ENCODE measurements at regions of chr3 and their contacts with region 1.

Region 1: DNA sequence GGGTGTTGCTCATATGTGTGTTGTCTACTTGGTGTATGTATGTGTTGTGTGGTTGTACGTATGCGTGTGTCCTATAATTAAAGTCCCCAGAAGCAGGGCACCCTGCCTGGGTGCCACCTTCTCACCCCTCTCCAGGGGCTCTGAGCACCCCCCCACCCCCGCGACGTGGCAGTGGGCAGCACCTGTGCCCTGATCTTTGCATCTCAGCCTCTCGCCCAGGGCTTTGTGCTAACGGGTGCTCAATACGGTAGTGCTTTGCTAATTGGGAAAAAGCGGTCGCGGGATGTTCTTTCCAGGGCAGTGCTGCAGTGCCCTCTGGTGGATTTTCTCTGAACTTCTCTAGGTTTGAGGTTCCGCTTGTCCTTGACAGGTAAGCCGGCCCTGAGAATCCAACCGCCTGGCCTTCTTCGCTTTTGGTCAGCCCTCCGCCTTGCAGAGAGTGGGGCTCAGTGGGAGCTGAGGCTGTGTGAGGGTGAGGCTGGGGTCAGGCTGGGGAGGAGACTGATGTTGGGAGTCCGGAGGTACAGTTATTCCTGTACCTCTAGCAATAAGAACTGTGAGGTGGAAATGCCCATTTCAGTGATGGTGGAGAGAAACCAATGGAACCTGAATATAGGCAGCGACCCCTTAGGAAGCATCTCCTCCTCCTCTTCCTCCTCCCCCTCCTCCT is 17.6 kb upstream of the EPHB3 start:
- DNase-seq: peak; percentile 47 to 86 (median 80)
- ATAC-seq: peak; percentile 87
- H3K4me3 ChIP-seq: no peak overlapping the region
- H3K4me3 Mint-ChIP-seq: peak overlapping the region in 9 of 10 donors; percentile 39 to 67 (median 58)
- H3K27ac ChIP-seq: no peak overlapping the region
- H3K27ac Mint-ChIP-seq: peak overlapping the region in 5 of 9 donors; percentile 28 to 86 (median 52)
- H3K4me1 ChIP-seq: peaks cover 0 to 3% of the 10 kb centered on the region in 2 donors
- H3K4me1 Mint-ChIP-seq: peaks cover 7 to 36% (median 26%) of the 10 kb centered on the region in 7 donors
- H3K27me3 ChIP-seq: no peaks in the 10 kb centered on the region
- H3K27me3 Mint-ChIP-seq: peaks cover 0 to 30% (median 19%) of the 10 kb centered on the region in 5 donors

Region 2: GRCh38 chr3:183895296-183895695 is 648.7 kb before region 1 on chr3:
- CTCF ChIA-PET with region 1: interaction called, 5 read pairs
- POLR2A ChIA-PET with region 1: no interaction called
- intact Hi-C with region 1: loop called (anchors 1 to 5 kb)
- DNase-seq: peak in 7 of 9 donors; percentile 19 to 67 (median 49)
- ATAC-seq: peak; percentile 91
- H3K4me3 ChIP-seq: no peak overlapping the region
- H3K4me3 Mint-ChIP-seq: no peak overlapping the region
- H3K27ac ChIP-seq: no peak overlapping the region
- H3K27ac Mint-ChIP-seq: peak overlapping the region in 1 of 9 donors; percentile 18
- H3K4me1 ChIP-seq: no peaks in the 10 kb centered on the region
- H3K4me1 Mint-ChIP-seq: peaks cover 0 to 6% (median 0%) of the 10 kb centered on the region in 7 donors
- H3K27me3 ChIP-seq: peaks cover 0 to 3% of the 10 kb centered on the region in 2 donors
- H3K27me3 Mint-ChIP-seq: peaks cover 7 to 29% (median 11%) of the 10 kb centered on the region in 5 donors

Region 3: DNA sequence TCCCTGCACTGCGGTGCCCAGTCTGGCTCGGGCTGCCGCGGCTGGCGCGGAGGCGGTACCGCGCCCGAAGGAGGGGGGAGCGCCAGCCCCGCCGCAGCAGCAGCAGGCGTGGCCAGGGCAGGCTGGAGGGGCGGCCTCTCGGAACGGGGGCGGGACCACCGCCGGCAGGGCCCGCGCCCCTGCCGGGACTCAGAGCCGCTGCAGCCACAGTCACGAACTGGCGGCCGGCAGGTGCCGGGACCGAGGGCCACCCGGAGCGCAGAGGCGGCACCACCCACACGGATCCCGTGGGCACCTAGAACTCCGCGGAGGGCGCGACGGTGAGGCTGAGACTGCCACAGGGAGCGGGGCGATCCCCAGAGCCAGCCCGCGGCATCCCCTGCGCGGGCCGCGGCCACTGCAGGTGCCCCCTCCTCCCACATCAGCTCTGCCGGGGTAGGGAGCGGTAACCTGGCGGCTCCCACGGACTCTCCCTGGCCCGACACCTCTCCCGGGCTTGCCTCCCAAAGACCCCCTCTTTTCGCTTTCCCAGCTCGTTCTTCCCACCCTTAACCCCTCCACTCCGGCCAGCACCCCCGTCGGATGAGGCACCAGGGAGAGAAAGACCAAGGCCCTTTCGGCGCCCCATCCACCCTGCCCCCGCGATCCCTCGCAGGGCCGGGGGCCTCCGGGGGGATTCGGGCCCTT is 314.4 kb before region 1 on chr3 and contains the start of gene VWA5B2:
- CTCF ChIA-PET with region 1: no interaction called
- POLR2A ChIA-PET with region 1: no interaction called
- intact Hi-C with region 1: loop called in 1 of 2 experiments (anchors 2 kb)
- DNase-seq: peak; percentile 58 to 72 (median 66)
- ATAC-seq: peak; percentile 96
- H3K4me3 ChIP-seq: peak within 1 kb of the TSS; percentile 58
- H3K4me3 Mint-ChIP-seq: peak within 1 kb of the TSS; percentile 41 to 82 (median 74)
- H3K27ac ChIP-seq: no peak within 1 kb of the TSS
- H3K27ac Mint-ChIP-seq: no peak within 1 kb of the TSS
- H3K4me1 ChIP-seq: peaks cover 0 to 5% of the 10 kb centered on the region in 2 donors
- H3K4me1 Mint-ChIP-seq: peaks cover 8 to 14% (median 10%) of the 10 kb centered on the region in 7 donors
- H3K27me3 ChIP-seq: peaks cover 4 to 17% of the 10 kb centered on the region in 2 donors
- H3K27me3 Mint-ChIP-seq: peaks cover 46 to 65% (median 57%) of the 10 kb centered on the region in 5 donors
- total RNA-seq, gene VWA5B2: not detected

Region 4: GRCh38 chr3:184325715-184326369 is 218.1 kb before region 1 on chr3:
- CTCF ChIA-PET with region 1: no interaction called
- POLR2A ChIA-PET with region 1: no interaction called
- intact Hi-C with region 1: no loop called
- DNase-seq: peak in 1 of 9 donors; percentile 42
- ATAC-seq: no peak
- H3K4me3 ChIP-seq: no peak overlapping the region
- H3K4me3 Mint-ChIP-seq: no peak overlapping the region
- H3K27ac ChIP-seq: no peak overlapping the region
- H3K27ac Mint-ChIP-seq: peak overlapping the region in 1 of 9 donors; percentile 41
- H3K4me1 ChIP-seq: no peaks in the 10 kb centered on the region
- H3K4me1 Mint-ChIP-seq: peaks cover 0 to 12% (median 0%) of the 10 kb centered on the region in 7 donors
- H3K27me3 ChIP-seq: no peaks in the 10 kb centered on the region
- H3K27me3 Mint-ChIP-seq: no peaks in the 10 kb centered on the region

Region 5: DNA sequence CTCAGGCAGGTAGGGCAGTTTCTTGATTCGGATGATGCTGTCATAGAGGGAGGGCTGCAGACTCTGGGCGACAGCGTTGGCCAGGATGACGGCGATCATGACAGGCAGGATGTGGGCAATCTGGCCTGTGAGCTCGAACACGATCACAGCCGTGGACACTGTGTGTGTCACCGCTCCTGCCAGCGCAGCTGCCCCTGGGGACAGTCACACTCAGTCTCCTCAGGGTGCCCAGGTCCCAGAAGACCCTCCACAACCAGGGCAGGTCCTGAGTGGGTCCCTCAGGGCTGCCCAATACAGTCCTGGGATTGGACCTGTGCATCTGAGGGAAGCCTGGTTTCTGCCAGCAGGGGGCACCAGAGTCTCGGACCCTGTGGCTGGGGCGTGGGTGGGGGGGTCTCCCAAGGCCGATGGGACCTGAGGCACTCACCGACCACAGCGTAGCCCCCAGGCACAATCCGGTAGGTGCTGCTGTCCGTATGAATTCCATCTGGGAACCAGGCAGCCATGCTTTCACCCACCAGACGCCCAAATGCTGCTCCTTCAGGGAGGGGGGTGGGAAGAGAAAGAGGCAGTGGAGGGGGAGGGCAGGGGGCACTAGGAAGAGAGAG is 189.8 kb before region 1 on chr3:
- CTCF ChIA-PET with region 1: interaction called, 17 read pairs
- POLR2A ChIA-PET with region 1: no interaction called
- intact Hi-C with region 1: loop called in 1 of 2 experiments (anchors 1 kb)
- DNase-seq: peak; percentile 21 to 64 (median 48)
- ATAC-seq: peak; percentile 78
- H3K4me3 ChIP-seq: no peak overlapping the region
- H3K4me3 Mint-ChIP-seq: no peak overlapping the region
- H3K27ac ChIP-seq: no peak overlapping the region
- H3K27ac Mint-ChIP-seq: peak overlapping the region in 1 of 9 donors; percentile 55
- H3K4me1 ChIP-seq: peaks cover 0 to 7% of the 10 kb centered on the region in 2 donors
- H3K4me1 Mint-ChIP-seq: peaks cover 0 to 2% (median 0%) of the 10 kb centered on the region in 7 donors
- H3K27me3 ChIP-seq: no peaks in the 10 kb centered on the region
- H3K27me3 Mint-ChIP-seq: no peaks in the 10 kb centered on the region

Region 6: GRCh38 chr3:184417619-184418327 is 126.2 kb before region 1 on chr3:
- CTCF ChIA-PET with region 1: interaction called, 50 read pairs
- POLR2A ChIA-PET with region 1: no interaction called
- intact Hi-C with region 1: loop called (anchors 1 kb)
- DNase-seq: peak; percentile 48 to 76 (median 70)
- ATAC-seq: peak; percentile 96
- H3K4me3 ChIP-seq: no peak overlapping the region
- H3K4me3 Mint-ChIP-seq: no peak overlapping the region
- H3K27ac ChIP-seq: no peak overlapping the region
- H3K27ac Mint-ChIP-seq: no peak overlapping the region
- H3K4me1 ChIP-seq: no peaks in the 10 kb centered on the region
- H3K4me1 Mint-ChIP-seq: no peaks in the 10 kb centered on the region
- H3K27me3 ChIP-seq: no peaks in the 10 kb centered on the region
- H3K27me3 Mint-ChIP-seq: peaks cover 0 to 6% (median 2%) of the 10 kb centered on the region in 5 donors

Region 7: GRCh38 chr3:184513276-184514170 is 30.5 kb before region 1 on chr3:
- CTCF ChIA-PET with region 1: interaction called, 13 read pairs
- POLR2A ChIA-PET with region 1: no interaction called
- intact Hi-C with region 1: loop called (anchors 1 kb)
- DNase-seq: peak; percentile 59 to 83 (median 75)
- ATAC-seq: peak; percentile 99
- H3K4me3 ChIP-seq: peak overlapping the region; percentile 40
- H3K4me3 Mint-ChIP-seq: peak overlapping the region; percentile 12 to 81 (median 69)
- H3K27ac ChIP-seq: no peak overlapping the region
- H3K27ac Mint-ChIP-seq: no peak overlapping the region
- H3K4me1 ChIP-seq: no peaks in the 10 kb centered on the region
- H3K4me1 Mint-ChIP-seq: peaks cover 4 to 14% (median 11%) of the 10 kb centered on the region in 7 donors
- H3K27me3 ChIP-seq: peaks cover 0 to 4% of the 10 kb centered on the region in 2 donors
- H3K27me3 Mint-ChIP-seq: peaks cover 49 to 77% (median 63%) of the 10 kb centered on the region in 5 donors

Region 8: GRCh38 chr3:184561061-184561912 is 17.3 kb after region 1 on chr3 and contains the start of gene EPHB3:
- CTCF ChIA-PET with region 1: interaction called, 37 read pairs
- POLR2A ChIA-PET with region 1: interaction called, 5 read pairs
- intact Hi-C with region 1: loop called in 1 of 2 experiments (anchors 1 kb)
- DNase-seq: peak; percentile 81 to 90 (median 89)
- ATAC-seq: peak; percentile 92
- H3K4me3 ChIP-seq: peak within 1 kb of the TSS; percentile 55
- H3K4me3 Mint-ChIP-seq: peak within 1 kb of the TSS; percentile 66 to 87 (median 81)
- H3K27ac ChIP-seq: no peak within 1 kb of the TSS
- H3K27ac Mint-ChIP-seq: peak within 1 kb of the TSS in 8 of 9 donors; percentile 59 to 84 (median 68)
- H3K4me1 ChIP-seq: peaks cover 14 to 44% of the 10 kb centered on the region in 2 donors
- H3K4me1 Mint-ChIP-seq: peaks cover 18 to 56% (median 41%) of the 10 kb centered on the region in 7 donors
- H3K27me3 ChIP-seq: peaks cover 0 to 9% of the 10 kb centered on the region in 2 donors
- H3K27me3 Mint-ChIP-seq: peaks cover 16 to 73% (median 35%) of the 10 kb centered on the region in 5 donors
- total RNA-seq, gene EPHB3: 0.07 to 0.49 (median 0.32) TPM

Region 9: DNA sequence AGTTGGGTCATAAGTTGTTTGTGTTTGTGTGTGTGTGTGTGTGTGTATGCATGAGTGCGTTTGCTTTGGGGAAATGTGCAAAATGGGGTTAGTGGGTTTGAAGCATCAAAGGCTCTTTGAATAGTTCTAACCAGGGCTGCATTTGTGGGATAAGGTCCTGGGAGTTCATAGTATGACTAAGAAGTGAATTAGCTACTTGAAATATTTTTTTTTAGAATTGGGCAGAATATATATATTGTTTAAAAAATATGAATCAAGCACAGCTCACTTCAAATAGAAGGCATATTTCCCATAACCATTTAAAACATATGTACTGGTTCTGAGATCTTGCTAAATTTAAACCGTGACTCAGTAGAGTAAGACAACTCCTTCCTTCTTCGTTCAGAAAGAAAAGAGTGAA is 1237.8 kb after region 1 on chr3:
- CTCF ChIA-PET with region 1: no interaction called
- POLR2A ChIA-PET with region 1: no interaction called
- intact Hi-C with region 1: no loop called
- DNase-seq: no peak
- ATAC-seq: no peak
- H3K4me3 ChIP-seq: no peak overlapping the region
- H3K4me3 Mint-ChIP-seq: no peak overlapping the region
- H3K27ac ChIP-seq: no peak overlapping the region
- H3K27ac Mint-ChIP-seq: no peak overlapping the region
- H3K4me1 ChIP-seq: no peaks in the 10 kb centered on the region
- H3K4me1 Mint-ChIP-seq: no peaks in the 10 kb centered on the region
- H3K27me3 ChIP-seq: no peaks in the 10 kb centered on the region
- H3K27me3 Mint-ChIP-seq: peaks cover 0 to 38% (median 6%) of the 10 kb centered on the region in 5 donors

Measured in naive thymus-derived CD4-positive, alpha-beta T cell (primary cell).